ENCODE measurements at regions of chrX and their contacts with region 1.

Region 1: DNA sequence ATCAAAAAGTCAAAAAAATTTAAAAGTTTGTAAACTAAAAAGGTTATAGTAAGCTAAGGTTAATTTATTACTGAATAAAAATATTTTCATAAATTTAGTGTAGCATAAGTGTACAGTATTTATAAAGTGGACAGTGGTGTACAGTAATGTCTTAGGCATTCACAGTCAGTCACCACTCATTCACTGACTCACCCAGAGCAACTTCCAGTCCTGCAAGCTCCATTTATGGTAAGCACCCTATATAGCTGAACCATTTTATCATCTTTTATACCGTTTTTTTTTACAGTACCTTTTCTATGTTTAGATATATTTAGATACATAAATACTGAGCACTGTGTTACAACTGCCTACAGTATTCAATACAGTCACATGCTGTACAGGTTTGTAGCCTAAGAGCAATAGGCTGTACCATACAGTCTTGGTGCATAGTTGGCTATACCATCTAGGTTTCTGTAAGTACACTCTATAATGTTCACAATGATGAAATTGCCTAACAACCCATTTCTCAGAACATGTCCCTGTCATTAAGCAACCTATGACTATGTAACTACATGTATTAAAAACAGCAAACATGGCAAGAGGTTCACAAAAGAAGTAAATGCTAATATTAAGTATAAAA is 18.6 kb downstream of the ACSL4 start:
- DNase-seq: peak; percentile 23 to 87
- H3K4me3 ChIP-seq: no peak overlapping the region
- H3K27ac ChIP-seq: peak overlapping the region; percentile 79
- H3K4me1 ChIP-seq: peaks cover 40% of the 10 kb centered on the region
- H3K27me3 ChIP-seq: no peaks in the 10 kb centered on the region
- CTCF ChIP-seq: no peak

Region 2: DNA sequence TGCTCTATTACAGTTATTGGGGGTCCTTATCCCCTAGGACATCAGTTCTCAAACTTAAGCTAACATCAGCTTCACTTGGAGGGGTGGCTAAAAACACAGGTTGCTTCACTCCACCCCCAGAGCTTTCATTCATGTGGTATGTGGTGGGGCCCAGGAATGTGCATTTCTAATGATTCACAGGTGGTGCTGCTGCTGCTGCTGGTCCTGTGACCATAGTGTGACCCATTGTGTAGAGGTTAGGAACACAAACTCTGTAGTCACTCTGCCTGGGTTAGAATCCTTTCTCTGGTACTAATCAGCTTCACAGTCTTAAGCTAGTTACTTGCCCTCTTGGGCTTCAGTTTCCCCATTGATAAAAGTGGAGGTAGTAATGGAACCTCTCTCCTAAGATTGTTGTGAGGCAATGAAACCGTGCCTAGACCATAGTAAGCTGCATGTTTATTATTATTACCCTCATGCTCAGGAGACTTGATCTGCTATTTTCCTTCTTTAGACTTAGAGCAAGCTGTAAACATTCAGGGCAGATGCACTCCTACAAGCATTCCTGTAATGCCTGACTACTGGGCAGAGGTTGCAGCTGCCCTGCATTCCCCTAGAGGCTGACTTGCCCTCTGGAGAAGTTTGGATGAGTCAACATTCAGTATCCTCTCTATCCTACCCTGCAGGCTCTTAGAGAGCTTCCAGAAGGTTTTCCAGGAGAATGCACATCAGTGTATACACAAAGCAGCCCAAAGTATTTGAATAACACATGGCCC is 112.7 kb after region 1 on chrX:
- CTCF ChIA-PET with region 1: interaction called, 11 read pairs
- POLR2A ChIA-PET with region 1: interaction called, 8 read pairs
- intact Hi-C with region 1: no loop called
- DNase-seq: peak; percentile 46 to 73
- H3K4me3 ChIP-seq: no peak overlapping the region
- H3K27ac ChIP-seq: no peak overlapping the region
- H3K4me1 ChIP-seq: peaks cover 29% of the 10 kb centered on the region
- H3K27me3 ChIP-seq: no peaks in the 10 kb centered on the region
- CTCF ChIP-seq: no peak

Measured in PC-9 (cell line).